Posterior cingulate gyrus (tissue), 11 donors: ENCODE measurements at regions of chr1 and their contacts with region 1.

Region 1: DNA sequence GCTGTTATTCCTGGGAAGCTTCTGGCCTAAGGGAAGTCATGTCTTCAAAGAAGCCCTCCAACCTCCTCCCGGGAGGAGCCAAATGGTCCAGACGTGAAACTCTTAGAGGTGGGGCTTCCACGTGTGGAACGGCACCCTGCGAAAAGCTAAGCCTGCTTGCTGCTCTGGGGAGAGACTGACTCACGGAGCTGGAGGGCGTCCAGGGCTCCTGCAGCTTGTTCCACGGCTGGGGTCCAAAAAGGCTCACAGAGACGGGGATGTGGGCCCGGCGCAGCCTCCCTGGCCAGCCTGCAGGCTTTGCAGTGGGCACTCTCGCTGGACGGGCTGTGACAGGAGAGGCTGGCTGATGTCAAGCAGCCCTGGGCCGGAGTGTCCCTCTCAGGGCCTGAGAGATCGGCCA is 105.1 kb downstream of the COLGALT2 start:
- DNase-seq: peak; percentile 78 to 97 (median 86)

Region 2: GRCh38 chr1:184051485-184052193 is 119.2 kb after region 1 on chr1 and contains the start of gene TSEN15:
- intact Hi-C with region 1: loop called (anchors 5 kb)
- DNase-seq: peak; percentile 58 to 95 (median 76)